HEK293T (cell line): ENCODE measurements at regions of chr6 and their contacts with region 1.

Region 1: GRCh38 chr6:112253841-112254816 is at the start of gene LAMA4:
- DNase-seq: peak; percentile 67

Region 2: DNA sequence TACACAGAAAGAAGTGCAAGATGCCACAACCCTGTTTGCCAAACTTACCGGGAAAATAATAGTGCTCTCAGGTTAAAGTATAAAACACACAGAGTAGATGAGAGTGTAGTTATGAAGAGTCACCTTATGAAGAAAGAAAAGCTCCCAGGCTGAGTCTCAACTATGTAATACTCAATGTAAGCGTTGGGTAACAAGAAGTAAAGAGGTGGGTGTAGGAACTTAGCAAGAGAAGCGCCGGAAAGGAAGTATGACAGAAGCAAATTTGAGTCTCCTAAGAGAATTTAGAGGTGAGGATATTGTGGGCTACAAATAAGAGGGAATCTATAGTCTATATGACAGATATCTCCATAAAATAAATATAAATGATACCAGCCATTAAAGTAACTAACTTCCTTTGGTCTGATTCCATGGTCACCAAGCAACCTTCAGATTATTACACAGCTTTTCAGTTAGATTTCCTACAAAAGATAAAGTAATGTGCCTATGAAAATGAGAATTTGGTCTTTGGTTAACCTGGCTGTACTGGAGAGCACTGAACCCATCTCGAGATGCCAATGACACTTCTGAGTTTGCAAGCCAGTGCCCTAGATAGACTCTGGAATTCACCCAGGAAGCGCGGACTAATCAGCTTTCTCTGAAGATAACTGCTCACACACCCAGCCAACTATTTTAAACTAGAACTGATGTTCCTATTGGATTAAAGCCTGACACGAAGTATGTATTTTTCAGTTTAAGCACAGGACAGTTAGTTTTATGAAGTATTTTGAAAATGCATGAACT is 168.7 kb before region 1 on chr6:
- CTCF ChIA-PET with region 1: no interaction called
- POLR2A ChIA-PET with region 1: no interaction called
- DNase-seq: no peak

Region 3: DNA sequence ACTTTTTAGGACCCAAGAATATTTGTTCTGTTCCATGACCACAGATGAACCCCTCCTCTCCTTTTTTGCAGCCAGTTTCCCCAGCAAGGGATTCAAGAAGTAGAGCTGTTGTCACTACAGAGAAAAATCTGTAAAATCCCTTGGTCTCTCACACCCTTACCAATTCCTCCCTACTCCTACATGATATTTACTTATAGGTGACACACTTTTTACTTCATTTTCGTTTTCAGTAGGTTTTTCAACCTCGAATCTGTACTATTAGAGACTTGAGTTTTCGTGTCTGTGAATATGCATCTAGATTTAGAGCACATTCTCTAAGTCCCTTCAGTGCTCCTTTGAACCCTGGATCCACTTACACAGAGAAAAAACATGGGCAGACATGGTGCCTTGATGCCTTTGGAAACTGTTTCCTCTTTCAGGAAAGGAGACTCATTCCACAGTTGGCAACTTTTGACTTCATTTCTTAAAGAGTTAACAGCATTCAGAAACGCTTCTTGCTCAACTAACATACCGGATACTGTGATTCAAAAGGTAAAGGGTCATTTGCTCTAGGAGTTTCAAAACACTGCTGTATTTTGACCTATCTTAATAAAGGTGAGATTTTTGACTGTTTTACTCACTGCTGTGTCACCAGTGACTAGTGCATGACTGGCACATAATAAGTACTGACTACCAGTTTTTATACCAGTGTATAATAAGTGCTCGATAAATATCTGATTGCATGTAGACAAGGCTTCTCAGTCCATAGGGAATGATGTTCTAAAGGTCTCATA is 50.4 kb before region 1 on chr6:
- CTCF ChIA-PET with region 1: no interaction called
- POLR2A ChIA-PET with region 1: interaction called, 12 read pairs
- DNase-seq: no peak

Region 4: DNA sequence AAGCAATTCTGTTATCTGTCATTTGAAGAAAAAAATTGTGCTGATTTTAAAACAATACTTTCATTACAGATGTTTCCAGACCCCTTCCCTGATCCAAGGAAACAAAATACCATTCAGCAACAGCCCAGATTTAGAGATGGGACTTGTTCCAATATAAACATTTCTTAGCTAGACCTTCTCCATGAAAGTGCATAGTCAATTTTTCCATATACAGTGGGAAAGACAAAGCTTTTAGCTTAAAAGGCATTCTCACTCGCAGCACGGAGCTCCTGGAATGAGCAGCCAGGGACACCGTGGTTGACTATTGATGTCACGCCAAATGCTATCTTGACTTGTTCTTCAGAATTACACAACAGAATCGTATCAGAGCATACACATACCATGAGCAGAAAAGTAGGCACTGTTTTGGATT is 21.3 kb before region 1 on chr6:
- CTCF ChIA-PET with region 1: interaction called, 5 read pairs
- POLR2A ChIA-PET with region 1: interaction called, 26 read pairs
- DNase-seq: peak; percentile 55

Region 5: GRCh38 chr6:112269114-112269513 is 15.0 kb after region 1 on chr6:
- CTCF ChIA-PET with region 1: interaction called, 5 read pairs
- POLR2A ChIA-PET with region 1: interaction called, 11 read pairs
- DNase-seq: peak; percentile 30

Region 6: DNA sequence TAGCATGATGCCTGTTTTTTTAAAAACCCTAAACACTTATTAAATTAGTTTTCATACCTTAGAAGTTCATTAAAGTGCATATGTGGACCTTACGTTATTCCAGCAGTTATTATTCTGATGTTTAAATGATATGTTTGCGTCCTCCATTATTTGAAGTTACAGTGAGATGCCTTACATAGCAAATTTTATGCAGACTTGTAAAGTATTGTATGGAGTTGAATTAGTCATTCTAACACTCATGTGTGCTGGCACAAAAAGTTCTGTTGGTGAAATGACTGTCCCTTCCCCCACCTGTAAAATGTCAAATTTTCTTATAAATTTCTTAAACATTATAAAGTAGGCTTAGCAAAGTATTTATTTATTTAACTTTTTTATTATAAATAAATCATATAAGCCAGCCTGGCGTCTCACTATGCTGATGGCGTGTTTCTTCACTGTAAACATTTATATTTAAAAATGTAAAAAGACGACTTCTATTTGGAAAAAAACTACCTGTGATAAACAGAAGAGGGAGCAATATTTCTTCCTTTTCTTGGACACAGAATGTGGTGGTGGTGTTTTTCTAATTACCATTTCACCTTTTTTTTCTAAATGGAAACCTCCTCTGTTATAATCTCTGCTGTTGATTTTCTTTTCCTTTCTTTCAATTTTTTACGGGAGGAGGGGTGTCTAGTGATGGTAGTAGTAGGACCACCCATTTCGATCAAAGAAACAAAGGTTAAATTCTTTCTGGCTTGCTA is 248.4 kb after region 1 on chr6:
- CTCF ChIA-PET with region 1: no interaction called
- POLR2A ChIA-PET with region 1: no interaction called
- DNase-seq: peak; percentile 17